ENCODE measurements at regions of chr19 and their contacts with region 1.

Region 1: DNA sequence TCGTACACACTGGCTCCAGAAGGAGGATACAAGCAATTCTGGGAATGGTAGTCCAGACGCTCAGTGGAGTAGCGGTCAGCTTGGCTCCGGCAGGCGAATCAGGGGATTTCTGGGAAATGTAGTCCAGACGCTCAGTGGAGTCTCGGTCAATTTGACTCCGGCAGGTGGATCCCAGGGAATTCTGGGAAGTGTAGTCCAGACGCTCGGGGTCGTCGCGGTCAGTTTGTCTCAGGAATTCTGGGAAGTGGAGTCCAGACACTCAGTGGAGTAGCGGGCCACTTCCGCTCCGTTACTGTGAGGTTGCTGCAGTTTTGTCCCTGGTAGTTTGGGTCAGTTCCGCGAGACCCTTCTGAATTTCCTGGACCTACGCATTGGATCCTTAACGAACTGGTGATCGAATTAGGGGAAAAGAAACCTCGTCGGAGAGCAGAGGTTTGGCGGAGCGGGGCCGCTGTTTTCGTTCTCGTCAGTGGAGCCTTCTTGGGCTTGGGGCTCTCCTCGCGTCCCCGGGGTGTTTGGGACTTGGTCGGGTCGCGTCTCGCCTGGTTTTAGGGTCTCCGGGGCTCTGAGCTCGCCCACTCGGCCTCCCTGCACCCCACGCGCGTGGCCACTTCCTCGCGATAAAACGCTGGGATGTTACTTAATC is at the start of gene ZNF225:
- DNase-seq: peak; percentile 92 to 98 (median 97)
- ATAC-seq: peak; percentile 98 to 99 (median 98)
- H3K4me3 ChIP-seq: peak within 1 kb of the TSS; percentile 43 to 86 (median 72)
- H3K27ac ChIP-seq: peak within 1 kb of the TSS in 11 of 12 donors; percentile 57 to 84 (median 74)
- H3K4me1 ChIP-seq: peaks cover 0 to 24% (median 18%) of the 10 kb centered on the region in 12 donors
- H3K27me3 ChIP-seq: no peaks in the 10 kb centered on the region
- CTCF ChIP-seq: peak in 4 of 12 donors; percentile 7 to 19 (median 9)
- POLR2A ChIP-seq: peak in 1 of 2 donors; percentile 49
- total RNA-seq, gene ZNF225: 1.3 to 6.2 (median 3.7) TPM

Region 2: GRCh38 chr19:44002566-44003460 is 110.4 kb before region 1 on chr19 and contains the start of gene ZNF230:
- intact Hi-C with region 1: loop called in 3 of 10 experiments (anchors 1 to 10 kb)
- DNase-seq: peak; percentile 89 to 95 (median 94)
- ATAC-seq: peak; percentile 99 to 100 (median 100)
- H3K4me3 ChIP-seq: peak within 1 kb of the TSS; percentile 61 to 92 (median 82)
- H3K27ac ChIP-seq: peak within 1 kb of the TSS; percentile 37 to 84 (median 75)
- H3K4me1 ChIP-seq: peaks cover 0 to 28% (median 11%) of the 10 kb centered on the region in 12 donors
- H3K27me3 ChIP-seq: no peaks in the 10 kb centered on the region
- CTCF ChIP-seq: no peak
- POLR2A ChIP-seq: peak in 1 of 2 donors; percentile 41
- total RNA-seq, gene ZNF230: 1.7 to 4.3 (median 2.5) TPM

Region 3: GRCh38 chr19:44093931-44094765 is 19.1 kb before region 1 on chr19 and contains the start of gene ZNF224:
- intact Hi-C with region 1: loop called in 5 of 10 experiments (anchors 1 to 2 kb)
- DNase-seq: peak; percentile 93 to 95 (median 94)
- ATAC-seq: peak; percentile 95 to 99 (median 99)
- H3K4me3 ChIP-seq: peak within 1 kb of the TSS; percentile 67 to 89 (median 77)
- H3K27ac ChIP-seq: peak within 1 kb of the TSS in 11 of 12 donors; percentile 51 to 86 (median 76)
- H3K4me1 ChIP-seq: peaks cover 0 to 24% (median 11%) of the 10 kb centered on the region in 12 donors
- H3K27me3 ChIP-seq: no peaks in the 10 kb centered on the region
- CTCF ChIP-seq: no peak
- POLR2A ChIP-seq: peak in 1 of 2 donors; percentile 62
- total RNA-seq, gene ZNF224: 9.9 to 17.7 (median 13.0) TPM

Region 4: DNA sequence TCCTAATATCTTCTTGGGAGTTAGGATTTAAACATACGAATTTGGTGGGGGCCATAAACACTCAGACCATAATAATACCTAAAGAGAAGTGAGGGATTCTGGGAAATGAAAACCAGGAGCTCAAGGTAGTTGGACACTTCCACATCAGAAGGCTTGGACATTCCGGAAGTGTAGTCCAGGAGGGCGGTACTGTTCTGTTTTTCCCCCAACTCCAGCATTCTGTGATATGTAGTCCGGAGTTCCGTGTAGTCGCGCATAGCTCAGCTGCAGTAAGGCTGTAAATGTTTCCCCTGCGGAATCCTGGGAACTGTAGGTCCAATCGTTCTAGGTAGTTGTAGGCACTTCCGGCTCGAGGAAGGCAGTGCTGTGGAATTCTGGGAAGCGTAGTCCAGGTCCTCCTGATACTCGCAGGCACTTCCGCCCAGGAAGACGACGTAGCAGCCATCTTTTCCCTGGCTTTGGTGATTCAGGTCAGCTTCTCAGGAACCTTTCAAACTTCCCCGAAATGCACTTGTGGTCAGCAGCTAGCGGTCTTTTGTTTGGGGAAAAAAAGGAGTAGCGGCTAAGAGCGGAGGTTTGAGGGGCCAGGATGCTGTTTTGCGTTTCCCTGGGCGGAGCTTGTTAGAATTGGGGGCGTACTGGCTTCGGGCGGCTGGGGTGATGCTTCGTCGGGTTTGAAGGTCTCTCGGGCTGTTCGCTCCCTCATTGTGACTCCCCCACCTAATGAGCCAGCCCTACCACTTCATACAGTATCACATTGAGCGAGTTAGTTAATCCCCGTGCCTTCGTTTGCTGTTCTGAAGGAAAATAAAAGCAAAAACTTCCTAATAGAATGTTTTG is 51.6 kb after region 1 on chr19 and contains the start of gene ZNF226:
- intact Hi-C with region 1: loop called in 7 of 10 experiments (anchors 2 to 10 kb)
- DNase-seq: peak; percentile 88 to 94 (median 93)
- ATAC-seq: peak; percentile 99 to 100 (median 100)
- H3K4me3 ChIP-seq: peak within 1 kb of the TSS; percentile 50 to 92 (median 73)
- H3K27ac ChIP-seq: peak within 1 kb of the TSS; percentile 59 to 91 (median 88)
- H3K4me1 ChIP-seq: peaks cover 0 to 22% (median 11%) of the 10 kb centered on the region in 12 donors
- H3K27me3 ChIP-seq: no peaks in the 10 kb centered on the region
- CTCF ChIP-seq: no peak
- POLR2A ChIP-seq: peak in 1 of 2 donors; percentile 76
- total RNA-seq, gene ZNF226: 12.2 to 29.2 (median 21.1) TPM

Region 5: DNA sequence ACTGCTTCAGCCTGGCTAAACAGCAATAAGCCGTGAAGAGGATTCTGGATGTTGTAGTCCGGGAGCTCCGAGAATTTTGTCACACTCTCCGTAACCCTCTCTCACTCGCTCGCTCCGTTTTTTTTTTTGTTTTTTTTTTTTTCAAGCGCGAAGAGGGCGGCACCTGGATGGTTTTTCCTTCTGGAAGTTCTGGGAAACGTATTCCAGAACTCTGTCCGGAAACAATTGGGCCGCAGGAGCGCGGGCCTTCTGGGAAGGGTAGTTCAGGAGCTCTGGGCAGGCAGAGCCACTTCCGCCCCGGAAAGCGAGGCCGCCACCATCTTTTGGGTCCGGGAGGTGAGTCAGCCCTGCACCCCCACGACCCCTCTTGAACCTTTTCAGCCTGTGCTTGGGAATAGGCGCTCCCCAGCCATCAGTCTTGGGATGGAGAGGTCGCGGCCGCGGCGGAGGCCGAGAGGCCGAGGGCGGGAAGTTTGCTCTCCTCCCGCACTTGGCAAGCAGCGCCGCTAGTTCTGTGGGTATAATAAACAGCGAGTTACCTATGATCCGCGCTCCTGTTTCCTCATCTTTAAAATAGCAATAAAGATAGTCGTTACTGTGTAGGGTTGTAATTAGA is 99.1 kb after region 1 on chr19 and contains the start of gene ZNF227:
- intact Hi-C with region 1: loop called in 6 of 10 experiments (anchors 1 to 5 kb)
- DNase-seq: peak; percentile 92 to 96 (median 95)
- ATAC-seq: peak; percentile 96 to 98 (median 98)
- H3K4me3 ChIP-seq: peak within 1 kb of the TSS; percentile 47 to 95 (median 76)
- H3K27ac ChIP-seq: peak within 1 kb of the TSS; percentile 66 to 92 (median 85)
- H3K4me1 ChIP-seq: peaks cover 0 to 27% (median 18%) of the 10 kb centered on the region in 12 donors
- H3K27me3 ChIP-seq: no peaks in the 10 kb centered on the region
- CTCF ChIP-seq: no peak
- POLR2A ChIP-seq: peak in 1 of 2 donors; percentile 53
- total RNA-seq, gene ZNF227: 4.7 to 20.5 (median 11.0) TPM